ENCODE measurements at regions of chr12 and their contacts with region 1.

Region 1: GRCh38 chr12:65169320-65170208 is at the start of gene LEMD3:
- DNase-seq: peak; percentile 95
- H3K4me3 Mint-ChIP-seq: peak within 1 kb of the TSS; percentile 97
- H3K27ac Mint-ChIP-seq: peak within 1 kb of the TSS; percentile 97
- H3K4me1 Mint-ChIP-seq: peaks cover 40% of the 10 kb centered on the region
- H3K27me3 Mint-ChIP-seq: peaks cover 4% of the 10 kb centered on the region
- total RNA-seq, gene LEMD3: 32.0 to 35.4 TPM

Region 2: GRCh38 chr12:65156366-65156841 is 13.2 kb before region 1 on chr12:
- CTCF ChIA-PET with region 1: interaction called, 39 read pairs
- POLR2A ChIA-PET with region 1: interaction called, 123 read pairs
- DNase-seq: peak; percentile 28
- H3K4me3 Mint-ChIP-seq: peak overlapping the region; percentile 33
- H3K27ac Mint-ChIP-seq: peak overlapping the region; percentile 80
- H3K4me1 Mint-ChIP-seq: peaks cover 19% of the 10 kb centered on the region
- H3K27me3 Mint-ChIP-seq: peaks cover 19% of the 10 kb centered on the region

Region 3: GRCh38 chr12:65182012-65182739 is 12.6 kb after region 1 on chr12:
- CTCF ChIA-PET with region 1: interaction called, 5 read pairs
- POLR2A ChIA-PET with region 1: interaction called, 60 read pairs
- DNase-seq: no peak
- H3K4me3 Mint-ChIP-seq: no peak overlapping the region
- H3K27ac Mint-ChIP-seq: no peak overlapping the region
- H3K4me1 Mint-ChIP-seq: peaks cover 44% of the 10 kb centered on the region
- H3K27me3 Mint-ChIP-seq: no peaks in the 10 kb centered on the region

Region 4: GRCh38 chr12:65192963-65193516 is 23.5 kb after region 1 on chr12:
- CTCF ChIA-PET with region 1: no interaction called
- POLR2A ChIA-PET with region 1: interaction called, 32 read pairs
- DNase-seq: no peak
- H3K4me3 Mint-ChIP-seq: no peak overlapping the region
- H3K27ac Mint-ChIP-seq: no peak overlapping the region
- H3K4me1 Mint-ChIP-seq: peaks cover 59% of the 10 kb centered on the region
- H3K27me3 Mint-ChIP-seq: no peaks in the 10 kb centered on the region

Region 5: GRCh38 chr12:65209655-65210043 is 40.1 kb after region 1 on chr12:
- CTCF ChIA-PET with region 1: interaction called, 13 read pairs
- POLR2A ChIA-PET with region 1: interaction called, 21 read pairs
- DNase-seq: no peak
- H3K4me3 Mint-ChIP-seq: peak overlapping the region; percentile 51
- H3K27ac Mint-ChIP-seq: peak overlapping the region; percentile 87
- H3K4me1 Mint-ChIP-seq: peaks cover 44% of the 10 kb centered on the region
- H3K27me3 Mint-ChIP-seq: no peaks in the 10 kb centered on the region

Region 6: DNA sequence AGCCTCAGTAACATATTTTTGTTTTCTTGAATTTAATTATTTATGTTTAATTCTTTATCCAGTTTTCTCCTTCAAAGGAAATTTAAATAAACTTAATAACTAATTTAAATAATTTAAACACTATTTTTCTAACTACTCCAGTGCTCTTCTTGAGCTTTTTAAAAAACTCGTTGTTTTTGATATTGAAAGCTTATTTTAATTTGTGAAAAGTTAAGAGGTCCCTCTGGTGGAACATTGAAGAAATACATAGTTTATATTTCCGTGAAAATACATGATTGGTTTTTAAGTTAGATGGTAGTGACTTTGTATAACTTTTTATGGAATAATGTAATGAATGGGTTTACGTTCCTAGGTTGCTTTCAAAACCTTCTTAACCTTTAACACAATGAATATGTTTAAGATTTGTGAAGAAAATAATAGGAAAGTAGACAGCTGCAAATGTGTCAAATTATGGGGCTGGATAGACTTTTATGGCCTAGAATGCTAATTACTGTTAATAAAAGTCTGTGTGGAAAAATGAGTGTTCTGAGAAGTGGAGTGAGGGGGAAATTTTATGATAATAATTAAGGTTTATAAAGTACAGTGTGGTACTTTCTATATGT is 63.0 kb after region 1 on chr12:
- CTCF ChIA-PET with region 1: interaction called, 31 read pairs
- POLR2A ChIA-PET with region 1: interaction called, 21 read pairs
- DNase-seq: no peak
- H3K4me3 Mint-ChIP-seq: no peak overlapping the region
- H3K27ac Mint-ChIP-seq: no peak overlapping the region
- H3K4me1 Mint-ChIP-seq: peaks cover 10% of the 10 kb centered on the region
- H3K27me3 Mint-ChIP-seq: no peaks in the 10 kb centered on the region

Region 7: DNA sequence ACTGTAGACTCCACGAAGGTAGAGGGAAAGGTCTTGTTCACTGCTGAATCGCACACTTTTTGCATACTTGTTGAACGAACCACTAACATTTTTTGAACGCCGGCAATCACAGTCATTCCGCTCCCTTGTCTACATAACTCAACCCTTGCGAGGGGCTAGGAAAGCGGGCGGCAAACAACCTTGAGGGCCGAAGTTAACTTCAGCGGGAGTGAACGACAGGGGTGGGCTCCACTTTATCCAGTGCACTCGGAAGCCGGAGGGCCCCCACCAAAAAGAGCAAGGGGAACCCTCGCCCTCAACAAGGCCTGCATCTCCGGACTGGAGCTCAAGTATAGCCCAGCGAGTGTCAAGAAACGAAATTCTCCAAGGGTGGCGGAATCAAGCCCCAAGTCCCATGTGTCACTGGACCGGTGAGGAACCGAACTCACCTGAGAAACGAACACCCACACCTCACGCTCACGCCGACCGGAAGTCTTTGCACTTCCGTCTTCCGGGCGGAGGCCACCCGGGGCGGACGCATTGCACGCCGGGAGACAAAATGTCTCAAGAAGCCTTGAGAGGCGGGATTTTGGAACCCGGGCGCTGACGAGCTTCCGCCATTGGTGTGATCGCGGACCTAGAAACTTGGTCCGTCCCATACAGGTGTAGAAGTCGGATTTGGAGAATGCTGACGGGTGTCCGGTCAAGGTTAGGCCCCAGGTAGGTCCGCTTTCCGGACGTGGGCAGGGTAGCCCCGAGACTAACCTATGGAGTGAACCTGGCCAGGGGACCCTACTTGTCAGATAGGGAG is 960.9 kb after region 1 on chr12 and contains the start of gene LLPH:
- CTCF ChIA-PET with region 1: no interaction called
- POLR2A ChIA-PET with region 1: interaction called, 11 read pairs
- DNase-seq: peak; percentile 94
- H3K4me3 Mint-ChIP-seq: peak within 1 kb of the TSS; percentile 97
- H3K27ac Mint-ChIP-seq: peak within 1 kb of the TSS; percentile 94
- H3K4me1 Mint-ChIP-seq: peaks cover 67% of the 10 kb centered on the region
- H3K27me3 Mint-ChIP-seq: no peaks in the 10 kb centered on the region
- total RNA-seq, gene LLPH: 30.0 to 33.3 TPM

Measured in activated CD4-positive, alpha-beta memory T cell treated with anti-CD3 and anti-CD28 coated beads, Interleukin-2, amount 10 ng/mL, durations not matched to agents 7 days and 5 days (primary cell).